Right cardiac atrium (tissue), 5 donors: ENCODE measurements at regions of chr1 and their contacts with region 1.

Region 1: GRCh38 chr1:8364528-8365442 is 46.9 kb downstream of the SLC45A1 start:
- DNase-seq: peak; percentile 76 to 87 (median 86)
- ATAC-seq: peak; percentile 50 to 59
- H3K4me3 ChIP-seq: no peak overlapping the region
- H3K27ac ChIP-seq: peak overlapping the region; percentile 85
- H3K4me1 ChIP-seq: peaks cover 34% of the 10 kb centered on the region
- H3K27me3 ChIP-seq: no peaks in the 10 kb centered on the region

Region 2: DNA sequence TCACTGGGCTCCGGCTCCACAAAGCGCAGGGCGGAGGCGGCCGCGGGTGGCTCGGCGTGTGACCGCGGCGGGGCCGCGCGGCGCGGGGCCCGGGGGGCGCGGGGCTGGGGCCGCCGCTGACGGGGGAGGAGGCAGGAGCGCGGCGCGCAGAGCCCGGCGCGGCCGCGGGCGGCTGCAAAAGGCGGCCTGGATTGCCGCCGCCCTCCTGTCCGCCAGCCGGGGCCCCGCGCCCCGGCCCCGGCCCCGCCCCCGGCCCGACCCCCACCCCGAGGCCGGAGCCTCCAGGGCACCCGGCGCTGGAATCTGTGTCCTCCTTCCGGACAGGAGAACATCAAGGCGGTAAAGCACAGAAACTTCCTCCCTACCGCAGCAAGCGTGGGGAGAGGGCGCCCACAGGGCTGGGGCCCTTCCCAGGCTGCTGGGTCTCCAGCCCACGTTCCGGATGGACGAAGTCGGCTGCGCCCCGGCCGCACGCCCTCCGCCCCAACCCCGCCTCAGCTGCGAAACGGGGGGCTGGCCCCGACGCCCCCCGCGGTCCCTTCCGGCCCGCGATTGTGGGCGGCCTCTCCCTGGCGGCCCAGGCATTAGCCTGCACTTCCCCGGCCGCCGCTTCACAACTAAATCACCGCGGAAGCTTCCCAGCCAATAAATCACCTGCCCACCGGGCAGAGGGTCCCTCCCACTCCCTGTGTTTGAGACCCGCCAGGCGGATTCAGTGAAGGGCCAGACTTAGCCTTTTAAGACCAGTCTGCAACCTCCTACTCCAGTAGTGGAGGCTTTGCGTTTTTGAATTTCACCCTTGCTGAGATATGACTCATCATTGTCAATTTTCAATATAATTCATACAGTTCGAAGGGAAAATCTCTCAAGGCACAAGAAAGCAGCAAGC is 59.1 kb after region 1 on chr1:
- intact Hi-C with region 1: loop called in 2 of 4 experiments (anchors 5 kb)
- DNase-seq: peak; percentile 47 to 84 (median 78)
- ATAC-seq: peak; percentile 47 to 60
- H3K4me3 ChIP-seq: peak overlapping the region; percentile 96
- H3K27ac ChIP-seq: peak overlapping the region; percentile 100
- H3K4me1 ChIP-seq: peaks cover 11% of the 10 kb centered on the region
- H3K27me3 ChIP-seq: no peaks in the 10 kb centered on the region